ENCODE measurements at regions of chr3 and their contacts with region 1.

Region 1: GRCh38 chr3:59575113-59576001 is 525.5 kb upstream of the CFAP20DC start:
- DNase-seq: peak; percentile 62 to 79 (median 74)
- H3K4me3 ChIP-seq: no peak overlapping the region
- H3K27ac ChIP-seq: no peak overlapping the region
- H3K4me1 ChIP-seq: no peaks in the 10 kb centered on the region
- H3K27me3 ChIP-seq: no peaks in the 10 kb centered on the region

Region 2: GRCh38 chr3:59809710-59810444 is 234.5 kb after region 1 on chr3:
- CTCF ChIA-PET with region 1: interaction called, 64 read pairs
- POLR2A ChIA-PET with region 1: interaction called, 5 read pairs
- DNase-seq: peak; percentile 30 to 52 (median 51)
- H3K4me3 ChIP-seq: no peak overlapping the region
- H3K27ac ChIP-seq: no peak overlapping the region
- H3K4me1 ChIP-seq: no peaks in the 10 kb centered on the region
- H3K27me3 ChIP-seq: no peaks in the 10 kb centered on the region

Region 3: DNA sequence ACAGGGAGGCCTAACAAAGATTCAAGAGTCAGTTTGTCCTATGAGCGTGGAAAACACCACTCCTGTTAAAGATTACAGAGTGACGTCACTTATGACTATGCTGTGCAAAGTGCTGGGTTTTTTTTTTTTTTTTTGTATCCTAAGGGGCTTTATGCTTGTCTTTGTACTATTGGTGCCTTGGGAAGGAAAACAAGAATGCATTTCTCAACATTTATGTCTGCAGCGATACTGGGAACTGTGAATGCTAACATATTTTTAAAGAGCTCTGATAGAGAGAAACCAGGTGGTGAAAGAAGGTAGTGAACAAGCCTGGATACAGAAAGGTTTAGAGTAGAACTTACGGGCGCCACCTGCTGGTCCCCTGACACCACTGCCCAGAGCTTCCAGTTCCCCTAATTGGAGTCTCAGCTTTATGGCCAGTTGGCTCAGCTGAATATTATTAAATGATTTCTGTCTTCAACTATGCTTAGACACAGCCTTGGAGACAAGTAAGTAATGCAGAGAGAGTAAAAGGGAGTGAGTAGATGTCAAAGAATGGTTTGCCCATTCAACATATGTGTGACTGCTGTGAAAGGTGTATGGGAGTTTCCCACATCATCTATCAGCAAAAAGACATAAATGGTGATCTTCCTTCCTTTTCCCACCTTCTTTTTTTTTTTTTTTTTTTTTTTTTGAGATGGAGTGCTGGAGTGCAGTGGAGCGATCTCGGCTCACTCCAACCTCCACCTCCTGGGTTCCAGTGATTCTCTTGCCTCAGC is 282.4 kb after region 1 on chr3:
- CTCF ChIA-PET with region 1: interaction called, 40 read pairs
- POLR2A ChIA-PET with region 1: no interaction called
- DNase-seq: peak; percentile 75 to 90 (median 82)
- H3K4me3 ChIP-seq: peak overlapping the region in 2 of 7 experiments; percentile 5 to 40
- H3K27ac ChIP-seq: no peak overlapping the region
- H3K4me1 ChIP-seq: peaks cover 0 to 9% (median 2%) of the 10 kb centered on the region in 4 experiments
- H3K27me3 ChIP-seq: no peaks in the 10 kb centered on the region